ENCODE measurements at regions of chr12 and their contacts with region 1.

Region 1: GRCh38 chr12:6764011-6764828 is 1.9 kb upstream of the PTMS start:
- DNase-seq: peak; percentile 92 to 96 (median 95)
- H3K4me3 ChIP-seq: peak overlapping the region in 5 of 7 experiments; percentile 10 to 71 (median 48)
- H3K27ac ChIP-seq: peak overlapping the region in 1 of 2 experiments; percentile 64
- H3K4me1 ChIP-seq: peaks cover 8 to 44% (median 31%) of the 10 kb centered on the region in 4 experiments
- H3K27me3 ChIP-seq: peaks cover 0 to 16% (median 0%) of the 10 kb centered on the region in 5 experiments

Region 2: DNA sequence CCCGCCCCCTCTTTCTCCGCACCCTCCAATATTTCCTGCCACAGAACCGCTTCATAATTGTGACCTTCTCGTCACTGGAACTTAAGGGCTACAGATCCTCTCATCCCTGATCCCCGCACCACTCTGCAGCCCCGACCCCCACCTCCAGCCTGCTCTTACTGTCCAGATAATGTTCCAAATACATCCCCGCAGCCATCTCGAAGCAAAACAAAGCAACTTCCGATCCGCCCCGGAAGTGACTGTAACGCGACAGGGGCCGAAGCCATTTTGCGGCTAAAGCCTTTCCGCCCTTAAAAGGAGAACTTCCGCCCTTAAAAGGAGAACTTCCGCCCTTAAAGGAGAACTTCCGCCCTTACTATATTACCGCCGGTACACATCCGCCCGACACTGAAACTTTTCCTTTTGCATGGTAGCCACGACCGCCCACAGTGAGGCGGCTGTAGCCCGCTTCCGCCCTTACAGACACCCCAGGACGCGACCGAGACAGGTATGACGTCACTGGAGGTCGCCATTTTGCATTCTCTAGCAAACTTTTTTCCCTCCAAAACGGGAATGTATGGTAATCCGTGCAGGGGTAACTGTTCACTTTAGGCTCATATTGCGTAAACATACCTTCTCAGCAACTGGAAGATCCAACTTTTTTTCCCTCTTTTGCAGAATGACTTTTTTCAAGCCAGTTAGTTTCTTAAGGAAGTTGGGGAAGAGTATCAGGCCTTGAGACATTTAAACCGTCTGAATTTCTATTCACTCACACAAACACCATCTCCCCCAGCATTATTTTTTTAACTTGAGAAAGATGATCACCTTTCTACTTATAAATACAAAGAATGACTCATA is 101.1 kb before region 1 on chr12 and contains the start of gene ING4:
- CTCF ChIA-PET with region 1: no interaction called
- POLR2A ChIA-PET with region 1: no interaction called
- DNase-seq: peak; percentile 99 to 100 (median 99)
- H3K4me3 ChIP-seq: peak within 1 kb of the TSS; percentile 57 to 95 (median 87)
- H3K27ac ChIP-seq: peak within 1 kb of the TSS; percentile 90 to 91
- H3K4me1 ChIP-seq: peaks cover 8 to 16% (median 13%) of the 10 kb centered on the region in 4 experiments
- H3K27me3 ChIP-seq: no peaks in the 10 kb centered on the region

Region 3: DNA sequence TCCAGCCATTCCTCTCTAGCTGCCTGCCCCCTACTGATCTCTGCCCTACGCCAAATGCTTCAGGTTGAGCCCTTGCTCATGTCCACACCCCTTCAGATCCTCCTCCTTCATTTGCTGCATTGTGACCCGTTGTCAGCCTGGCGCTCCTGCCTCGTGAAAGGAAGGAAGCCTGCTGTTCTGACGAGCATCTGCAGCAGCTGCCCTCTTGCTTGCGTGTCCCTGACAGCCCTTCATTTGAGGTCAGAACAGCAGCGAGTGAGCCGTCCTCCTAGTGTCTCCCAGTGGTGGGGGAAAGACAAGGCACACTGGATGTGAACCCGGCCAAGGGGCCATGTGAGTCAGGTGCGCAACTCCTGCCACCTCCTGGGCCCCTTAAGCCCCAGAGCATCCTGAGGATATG is 60.6 kb before region 1 on chr12:
- CTCF ChIA-PET with region 1: no interaction called
- POLR2A ChIA-PET with region 1: no interaction called
- DNase-seq: peak; percentile 78 to 93 (median 89)
- H3K4me3 ChIP-seq: no peak overlapping the region
- H3K27ac ChIP-seq: no peak overlapping the region
- H3K4me1 ChIP-seq: peaks cover 0 to 20% (median 12%) of the 10 kb centered on the region in 4 experiments
- H3K27me3 ChIP-seq: peaks cover 2 to 63% (median 29%) of the 10 kb centered on the region in 5 experiments

Region 4: DNA sequence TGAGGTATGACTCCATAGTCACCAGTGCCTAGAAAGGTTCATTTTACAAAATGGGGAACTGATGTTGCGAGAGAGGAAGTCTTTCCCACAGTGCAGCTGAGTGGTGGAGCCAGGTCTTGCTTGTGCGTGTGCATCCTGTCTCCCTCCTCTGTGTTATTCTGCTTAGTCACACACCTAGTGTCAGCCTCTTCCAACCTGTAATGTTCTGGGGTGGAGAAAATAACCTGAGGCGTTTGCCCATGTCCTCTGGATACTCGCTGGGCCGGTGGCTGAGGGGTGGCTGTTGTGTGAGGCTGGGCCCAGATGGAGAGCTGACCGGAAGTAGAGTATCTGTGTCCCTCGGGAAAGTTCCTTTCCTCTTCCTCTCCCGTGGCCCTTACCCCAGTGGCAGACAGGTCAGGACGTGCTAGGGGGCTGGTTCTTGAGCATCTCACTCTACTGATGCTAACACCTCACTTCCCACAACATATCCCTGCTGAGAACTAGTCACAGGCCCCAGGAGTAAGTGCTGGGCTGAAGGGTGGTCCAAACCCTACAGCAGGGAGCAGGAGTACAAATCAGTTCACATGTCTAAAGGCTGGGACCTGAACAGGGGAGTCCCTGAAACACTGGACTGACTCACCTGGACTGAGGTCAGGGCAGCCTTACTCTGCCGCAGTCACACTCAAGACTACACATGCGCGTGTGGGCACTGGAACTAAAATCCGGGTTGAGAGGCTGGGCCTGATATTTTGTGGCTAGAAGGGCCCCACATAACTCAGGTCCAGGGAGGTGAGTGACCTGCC is 18.3 kb before region 1 on chr12:
- CTCF ChIA-PET with region 1: interaction called, 237 read pairs
- POLR2A ChIA-PET with region 1: no interaction called
- DNase-seq: peak; percentile 88 to 98 (median 97)
- H3K4me3 ChIP-seq: peak overlapping the region in 1 of 7 experiments; percentile 61
- H3K27ac ChIP-seq: peak overlapping the region; percentile 84 to 92
- H3K4me1 ChIP-seq: peaks cover 4 to 26% (median 21%) of the 10 kb centered on the region in 4 experiments
- H3K27me3 ChIP-seq: no peaks in the 10 kb centered on the region

Region 5: GRCh38 chr12:6778574-6779550 is 14.6 kb after region 1 on chr12:
- CTCF ChIA-PET with region 1: interaction called, 237 read pairs
- POLR2A ChIA-PET with region 1: no interaction called
- DNase-seq: peak; percentile 86 to 93 (median 90)
- H3K4me3 ChIP-seq: peak overlapping the region; percentile 5 to 70 (median 62)
- H3K27ac ChIP-seq: no peak overlapping the region
- H3K4me1 ChIP-seq: peaks cover 0 to 28% (median 19%) of the 10 kb centered on the region in 4 experiments
- H3K27me3 ChIP-seq: peaks cover 0 to 13% (median 0%) of the 10 kb centered on the region in 5 experiments

Region 6: DNA sequence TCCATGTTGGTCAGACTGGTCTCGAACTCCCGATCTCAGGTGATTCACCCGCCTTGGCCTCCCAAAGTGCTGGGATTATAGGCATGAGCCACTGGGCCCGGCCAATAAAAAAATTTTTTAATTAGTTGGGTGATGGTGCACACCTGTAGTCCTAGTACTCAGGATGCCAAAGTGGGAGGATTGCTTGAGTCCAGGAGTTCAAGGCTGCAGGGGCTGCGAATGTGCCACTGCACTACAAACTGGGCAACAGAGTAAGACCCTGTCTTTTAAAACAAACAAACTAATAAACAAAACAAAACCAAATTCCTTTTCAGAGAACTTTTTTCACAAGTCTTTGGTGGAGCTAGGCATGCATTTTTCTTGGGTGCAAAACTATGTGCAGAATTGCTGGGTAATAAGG is 119.0 kb after region 1 on chr12:
- CTCF ChIA-PET with region 1: no interaction called
- POLR2A ChIA-PET with region 1: no interaction called
- DNase-seq: no peak
- H3K4me3 ChIP-seq: peak overlapping the region in 1 of 7 experiments; percentile 6
- H3K27ac ChIP-seq: no peak overlapping the region
- H3K4me1 ChIP-seq: peaks cover 0 to 6% (median 4%) of the 10 kb centered on the region in 4 experiments
- H3K27me3 ChIP-seq: no peaks in the 10 kb centered on the region

Measured in common myeloid progenitor, CD34-positive (primary cell).